Aorta (tissue), 5 donors: ENCODE measurements at regions of chr16 and their contacts with region 1.

Region 1: GRCh38 chr16:89922884-89923690 is at the start of gene TUBB3:
- DNase-seq: peak; percentile 85 to 90
- ATAC-seq: peak; percentile 40
- H3K4me3 ChIP-seq: peak within 1 kb of the TSS; percentile 23 to 45
- H3K27ac ChIP-seq: no peak within 1 kb of the TSS
- H3K4me1 ChIP-seq: no peaks in the 10 kb centered on the region
- H3K27me3 ChIP-seq: peaks cover 0 to 2% of the 10 kb centered on the region in 2 donors
- total RNA-seq, gene TUBB3: 5.6 to 12.5 TPM

Region 2: GRCh38 chr16:90022209-90023064 is 99.3 kb after region 1 on chr16:
- intact Hi-C with region 1: loop called in 1 of 2 experiments (anchors 10 kb)
- DNase-seq: peak; percentile 95 to 98
- ATAC-seq: peak; percentile 96
- H3K4me3 ChIP-seq: peak overlapping the region; percentile 60 to 91
- H3K27ac ChIP-seq: peak overlapping the region in 1 of 2 donors; percentile 20
- H3K4me1 ChIP-seq: no peaks in the 10 kb centered on the region
- H3K27me3 ChIP-seq: no peaks in the 10 kb centered on the region